Right ventricle myocardium inferior (tissue), 1 donor: ENCODE measurements at regions of chr12 and their contacts with region 1.

Region 1: DNA sequence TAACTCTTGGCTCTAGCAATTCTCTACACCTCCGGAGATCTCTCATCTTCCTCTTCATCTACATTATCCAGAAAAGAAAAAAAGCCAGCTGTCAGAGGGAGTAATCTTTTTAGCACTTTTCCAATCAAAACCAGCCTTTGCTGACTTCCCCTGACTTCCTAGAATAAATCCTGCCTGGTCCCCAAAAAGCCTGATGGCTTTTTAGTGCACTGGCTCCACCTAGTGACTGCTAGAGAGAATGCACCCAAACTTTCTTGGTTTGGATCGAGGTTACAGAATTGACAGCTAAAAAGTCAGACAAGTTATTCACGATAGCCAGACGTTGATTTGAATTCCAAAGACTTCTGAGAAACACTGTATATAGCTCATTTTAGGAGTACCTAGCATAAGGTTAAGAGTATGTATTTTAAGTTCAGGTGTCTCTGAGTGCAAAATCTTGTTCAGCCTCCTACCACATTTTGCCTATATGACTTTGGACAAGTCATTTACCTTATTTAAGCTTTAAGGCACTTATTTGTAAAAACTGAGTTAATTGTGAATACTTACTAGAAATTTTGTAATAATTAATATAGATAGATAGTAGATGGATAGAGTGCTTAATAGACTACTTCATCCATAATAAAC is 185.7 kb upstream of the GRIN2B start:
- DNase-seq: no peak
- ATAC-seq: no peak

Region 2: GRCh38 chr12:13734584-13735152 is 432.4 kb before region 1 on chr12:
- intact Hi-C with region 1: loop called (anchors 10 kb)
- DNase-seq: no peak
- ATAC-seq: no peak

Region 3: GRCh38 chr12:13864081-13864673 is 302.9 kb before region 1 on chr12:
- intact Hi-C with region 1: loop called (anchors 5 kb)
- DNase-seq: peak; percentile 86
- ATAC-seq: no peak

Region 4: GRCh38 chr12:14099994-14100393 is 67.1 kb before region 1 on chr12:
- intact Hi-C with region 1: no loop called
- DNase-seq: no peak
- ATAC-seq: no peak

Region 5: GRCh38 chr12:14126692-14127091 is 40.4 kb before region 1 on chr12:
- intact Hi-C with region 1: no loop called
- DNase-seq: no peak
- ATAC-seq: no peak

Region 6: DNA sequence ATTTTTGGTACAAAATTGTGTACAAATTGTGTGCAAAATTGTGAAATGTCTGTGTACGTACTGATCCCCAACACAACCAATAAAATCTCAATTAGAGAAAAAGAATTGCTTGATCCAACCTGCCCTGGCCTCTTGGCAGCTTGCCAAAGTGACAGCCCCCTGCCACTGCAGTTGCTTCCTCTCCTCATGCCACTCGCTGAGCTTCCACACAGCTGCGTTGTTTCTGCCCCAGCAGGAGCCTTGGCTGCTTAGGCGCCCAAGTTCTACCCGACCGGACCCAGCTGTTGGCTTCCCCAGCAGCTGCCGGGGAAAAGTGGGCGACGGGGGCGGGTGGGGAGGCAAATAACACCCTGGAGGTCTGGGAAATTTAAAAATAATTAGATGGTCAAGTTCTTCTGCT is 26.5 kb after region 1 on chr12:
- intact Hi-C with region 1: no loop called
- DNase-seq: no peak
- ATAC-seq: no peak